Heart right ventricle (tissue), 16 donors: ENCODE measurements at regions of chr1 and their contacts with region 1.

Region 1: DNA sequence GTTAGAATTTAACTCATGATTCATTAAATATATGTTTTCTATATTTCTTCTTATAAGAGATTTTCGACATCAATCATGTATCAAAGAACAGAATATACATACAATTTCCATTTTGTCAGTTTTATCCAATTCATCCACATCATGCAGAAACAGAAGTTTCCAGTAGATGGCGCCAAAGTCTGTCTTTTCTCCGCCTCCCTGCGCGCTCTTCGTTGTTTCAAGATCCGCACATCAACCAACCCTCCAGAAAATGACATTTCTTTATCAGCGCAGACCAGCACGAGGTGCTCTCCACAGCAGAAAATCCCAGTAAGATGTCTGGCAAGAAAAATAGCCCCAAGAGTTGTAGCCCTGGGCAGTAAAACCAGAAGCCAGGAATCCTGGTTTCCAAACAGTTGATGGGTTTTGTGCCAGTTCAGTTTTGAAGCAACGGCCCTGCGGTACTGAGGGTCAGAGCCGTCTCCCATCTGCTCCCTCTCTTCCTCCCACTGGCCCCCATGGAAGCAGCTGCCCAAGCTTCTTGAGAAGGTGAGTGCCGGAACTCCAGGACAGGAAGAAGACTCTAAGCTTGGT is 38.6 kb upstream of the GPR137B start:
- DNase-seq: peak in 1 of 2 donors; percentile 51
- ATAC-seq: peak in 6 of 8 donors; percentile 28 to 59 (median 50)
- H3K4me3 ChIP-seq: peak overlapping the region in 1 of 10 donors; percentile 17
- H3K27ac ChIP-seq: no peak overlapping the region
- H3K4me1 ChIP-seq: peaks cover 0 to 3% (median 0%) of the 10 kb centered on the region in 9 donors
- H3K27me3 ChIP-seq: no peaks in the 10 kb centered on the region
- CTCF ChIP-seq: peak; percentile 81 to 92 (median 87)

Region 2: GRCh38 chr1:236281654-236282424 is 178.1 kb after region 1 on chr1 and contains the start of gene ERO1B:
- intact Hi-C with region 1: loop called in 2 of 10 experiments (anchors 10 kb)
- DNase-seq: peak; percentile 96 to 98
- ATAC-seq: peak; percentile 99 to 100 (median 100)
- H3K4me3 ChIP-seq: peak within 1 kb of the TSS; percentile 69 to 99 (median 94)
- H3K27ac ChIP-seq: peak within 1 kb of the TSS in 9 of 10 donors; percentile 77 to 90 (median 87)
- H3K4me1 ChIP-seq: peaks cover 0 to 28% (median 13%) of the 10 kb centered on the region in 9 donors
- H3K27me3 ChIP-seq: peaks cover 0 to 6% (median 0%) of the 10 kb centered on the region in 7 donors
- CTCF ChIP-seq: peak in 2 of 9 donors; percentile 13 to 29
- total RNA-seq, gene ERO1B: 4.0 to 7.0 (median 5.6) TPM

Region 3: DNA sequence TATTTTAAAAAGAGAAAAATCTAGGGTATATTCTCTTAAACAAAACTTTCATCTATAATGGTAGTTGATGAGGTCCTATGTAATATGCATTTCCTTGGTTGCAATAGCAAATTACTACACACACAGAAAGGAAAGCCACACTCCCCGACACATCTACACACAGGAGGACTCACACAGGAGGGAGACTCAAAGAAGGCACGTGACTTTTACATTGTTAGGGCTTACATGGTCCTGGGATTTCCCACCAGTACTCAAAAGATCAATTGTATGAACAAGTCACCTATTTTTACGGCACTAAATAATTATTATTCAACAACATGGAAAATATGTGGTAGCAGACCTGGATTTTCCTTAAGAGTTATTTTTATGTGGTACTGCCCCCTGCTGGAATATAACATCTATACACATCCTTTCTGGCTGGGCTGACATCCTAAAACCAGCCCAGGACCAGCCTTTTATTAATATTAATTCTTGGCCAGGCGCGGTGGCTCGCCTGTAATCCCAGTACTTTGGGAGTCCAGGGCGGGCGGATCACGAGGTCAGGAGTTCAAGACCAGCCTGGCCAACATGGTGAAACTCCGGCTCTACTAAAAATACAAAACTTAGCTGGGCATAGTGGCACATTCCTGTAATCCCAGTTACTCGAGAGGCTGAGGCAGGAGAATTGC is 386.1 kb after region 1 on chr1:
- intact Hi-C with region 1: loop called in 7 of 10 experiments (anchors 2 to 5 kb)
- DNase-seq: peak in 1 of 2 donors; percentile 23
- ATAC-seq: peak in 6 of 8 donors; percentile 49 to 74 (median 58)
- H3K4me3 ChIP-seq: peak overlapping the region in 3 of 10 donors; percentile 3 to 25 (median 20)
- H3K27ac ChIP-seq: peak overlapping the region in 2 of 10 donors; percentile 9 to 19
- H3K4me1 ChIP-seq: peaks cover 0 to 23% (median 6%) of the 10 kb centered on the region in 9 donors
- H3K27me3 ChIP-seq: no peaks in the 10 kb centered on the region
- CTCF ChIP-seq: peak; percentile 34 to 71 (median 62)

Region 4: GRCh38 chr1:236534151-236534651 is 430.5 kb after region 1 on chr1:
- intact Hi-C with region 1: loop called in 8 of 10 experiments (anchors 5 to 10 kb)
- DNase-seq: no peak
- ATAC-seq: no peak
- H3K4me3 ChIP-seq: no peak overlapping the region
- H3K27ac ChIP-seq: no peak overlapping the region
- H3K4me1 ChIP-seq: peaks cover 0 to 50% (median 19%) of the 10 kb centered on the region in 9 donors
- H3K27me3 ChIP-seq: no peaks in the 10 kb centered on the region
- CTCF ChIP-seq: no peak

Region 5: GRCh38 chr1:236868625-236869467 is 765.1 kb after region 1 on chr1:
- intact Hi-C with region 1: loop called in 5 of 10 experiments (anchors 10 kb)
- DNase-seq: no peak
- ATAC-seq: no peak
- H3K4me3 ChIP-seq: no peak overlapping the region
- H3K27ac ChIP-seq: peak overlapping the region in 1 of 10 donors; percentile 86
- H3K4me1 ChIP-seq: peaks cover 0 to 46% (median 18%) of the 10 kb centered on the region in 9 donors
- H3K27me3 ChIP-seq: no peaks in the 10 kb centered on the region
- CTCF ChIP-seq: peak; percentile 69 to 96 (median 81)